RWPE1 (cell line): ENCODE measurements at regions of chr9 and their contacts with region 1.

Region 1: GRCh38 chr9:114653556-114654159 is 3.9 kb downstream of the TEX53 start:
- DNase-seq: peak; percentile 84
- H3K27ac ChIP-seq: no peak overlapping the region
- CTCF ChIP-seq: peak; percentile 97

Region 2: GRCh38 chr9:114405294-114406034 is 248.2 kb before region 1 on chr9:
- CTCF ChIA-PET with region 1: interaction called, 34 read pairs
- POLR2A ChIA-PET with region 1: no interaction called
- DNase-seq: peak; percentile 94
- H3K27ac ChIP-seq: peak overlapping the region; percentile 2; the same call in 1 of the 2 replicates
- CTCF ChIP-seq: peak; percentile 95

Region 3: DNA sequence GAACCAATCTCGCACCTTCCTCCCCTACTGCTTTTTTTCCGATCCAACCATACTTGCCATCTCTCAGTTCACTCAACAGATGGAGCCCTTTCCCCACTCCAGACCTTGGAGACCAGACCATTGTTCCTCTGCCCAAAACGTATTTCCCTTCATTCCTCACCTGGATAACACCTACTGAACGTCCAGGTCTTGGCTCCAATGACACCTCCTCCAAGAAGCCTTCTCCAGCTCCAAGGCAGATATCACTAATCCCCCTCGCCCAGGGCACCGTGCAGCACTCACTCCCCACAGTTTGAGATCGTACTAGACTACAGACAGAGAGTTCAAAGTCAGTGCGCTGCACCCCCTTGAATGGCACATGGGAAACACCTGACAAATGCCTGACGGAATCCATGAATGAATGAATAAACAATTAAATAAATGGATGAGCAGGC is 218.8 kb before region 1 on chr9:
- CTCF ChIA-PET with region 1: interaction called, 11 read pairs
- POLR2A ChIA-PET with region 1: no interaction called
- DNase-seq: peak; percentile 91
- H3K27ac ChIP-seq: no peak overlapping the region
- CTCF ChIP-seq: peak; percentile 87

Region 4: GRCh38 chr9:114505187-114506081 is 148.2 kb before region 1 on chr9 and contains the start of gene WHRN:
- CTCF ChIA-PET with region 1: interaction called, 12 read pairs
- POLR2A ChIA-PET with region 1: no interaction called
- DNase-seq: peak; percentile 100
- H3K27ac ChIP-seq: peak within 1 kb of the TSS; percentile 72
- CTCF ChIP-seq: no peak

Region 5: GRCh38 chr9:114587385-114588202 is 66.1 kb before region 1 on chr9 and contains the start of gene ATP6V1G1:
- CTCF ChIA-PET with region 1: interaction called, 12 read pairs
- POLR2A ChIA-PET with region 1: no interaction called
- DNase-seq: peak; percentile 100
- H3K27ac ChIP-seq: peak within 1 kb of the TSS; percentile 72
- CTCF ChIP-seq: no peak

Region 6: GRCh38 chr9:114606597-114607207 is 47.0 kb before region 1 on chr9:
- CTCF ChIA-PET with region 1: no interaction called
- POLR2A ChIA-PET with region 1: no interaction called
- DNase-seq: no peak
- H3K27ac ChIP-seq: no peak overlapping the region
- CTCF ChIP-seq: no peak